Heart right ventricle (tissue), 16 donors: ENCODE measurements at regions of chr17 and their contacts with region 1.

Region 1: DNA sequence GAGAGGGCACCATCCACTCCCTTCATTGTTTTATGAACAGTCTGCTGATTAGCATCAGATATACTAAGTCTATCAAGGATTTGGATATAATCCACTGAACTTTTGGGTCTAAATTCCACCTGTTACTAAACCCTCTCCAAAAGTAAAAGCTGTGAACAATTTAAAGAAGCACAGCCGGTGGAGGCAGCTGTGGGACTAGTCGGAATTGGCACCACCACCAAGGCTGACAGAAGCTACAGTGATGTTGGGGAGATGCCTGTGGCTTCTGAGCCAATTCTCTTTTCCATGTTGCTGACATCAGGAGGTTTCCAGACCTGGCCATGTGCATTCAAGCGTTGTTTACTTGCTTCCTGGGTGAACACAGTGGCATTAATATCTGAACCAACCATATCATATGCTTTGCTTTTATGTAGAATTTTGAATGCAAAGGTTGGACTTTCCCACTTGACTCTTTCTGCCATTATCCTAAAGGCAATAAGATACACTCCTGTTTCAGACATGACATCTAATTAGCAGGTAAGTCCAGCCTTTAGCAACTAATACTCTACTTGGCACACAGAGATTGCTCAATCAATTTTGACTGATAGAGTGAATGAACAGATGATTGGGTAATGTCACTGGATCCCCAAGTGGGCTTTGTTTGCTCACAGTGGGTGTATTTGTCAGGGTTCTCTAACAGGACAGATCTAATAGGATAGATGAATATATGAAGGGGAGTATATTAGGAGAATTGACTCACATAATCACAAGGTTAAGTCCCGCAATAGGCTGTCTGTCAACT is 679.2 kb upstream of the CA10 start:
- DNase-seq: no peak
- ATAC-seq: no peak
- H3K4me3 ChIP-seq: no peak overlapping the region
- H3K27ac ChIP-seq: no peak overlapping the region
- H3K4me1 ChIP-seq: no peaks in the 10 kb centered on the region
- H3K27me3 ChIP-seq: no peaks in the 10 kb centered on the region
- CTCF ChIP-seq: no peak

Region 2: DNA sequence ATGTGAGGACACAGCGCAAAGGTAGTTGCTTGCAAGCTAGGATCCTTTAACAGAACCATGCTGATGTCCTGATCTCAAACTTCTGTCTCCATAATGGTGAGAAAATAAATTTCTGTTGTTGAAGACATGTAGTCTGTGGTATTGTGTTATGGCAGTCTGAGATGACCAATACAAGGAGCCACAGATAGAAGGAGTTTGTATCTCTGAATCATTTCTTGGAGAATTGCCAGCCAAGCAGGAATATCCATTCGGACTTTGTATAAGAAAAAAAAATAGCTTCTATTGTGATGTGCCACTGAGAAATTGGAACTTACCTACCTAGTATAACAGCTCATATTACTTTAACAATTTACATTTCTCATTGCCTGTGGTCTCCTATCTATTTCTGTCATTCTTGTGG is 231.6 kb before region 1 on chr17:
- intact Hi-C with region 1: loop called in 1 of 10 experiments (anchors 10 kb)
- DNase-seq: no peak
- ATAC-seq: peak in 2 of 8 donors; percentile 31 to 37
- H3K4me3 ChIP-seq: no peak overlapping the region
- H3K27ac ChIP-seq: no peak overlapping the region
- H3K4me1 ChIP-seq: no peaks in the 10 kb centered on the region
- H3K27me3 ChIP-seq: no peaks in the 10 kb centered on the region
- CTCF ChIP-seq: no peak

Region 3: DNA sequence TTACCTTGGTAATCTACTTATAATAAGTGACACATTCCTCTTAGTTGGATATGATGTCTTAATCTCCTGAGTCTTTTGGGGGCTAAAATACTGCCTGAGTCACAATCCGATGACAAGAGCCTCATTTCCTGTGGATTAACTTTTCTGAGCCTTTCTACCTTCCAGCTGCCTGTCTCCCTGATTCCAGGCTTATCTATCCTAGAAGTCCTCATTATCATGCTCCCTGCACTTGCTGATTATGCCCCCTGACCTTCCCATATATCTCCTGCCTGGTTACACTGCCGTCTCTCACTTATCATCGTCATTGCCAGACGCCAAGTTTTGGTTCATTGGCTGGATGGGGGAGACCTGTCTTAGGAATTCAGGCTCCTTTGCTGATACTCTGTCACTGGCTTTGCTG is 48.2 kb after region 1 on chr17:
- intact Hi-C with region 1: loop called in 1 of 10 experiments (anchors 10 kb)
- DNase-seq: no peak
- ATAC-seq: no peak
- H3K4me3 ChIP-seq: no peak overlapping the region
- H3K27ac ChIP-seq: no peak overlapping the region
- H3K4me1 ChIP-seq: no peaks in the 10 kb centered on the region
- H3K27me3 ChIP-seq: peaks cover 0 to 28% (median 8%) of the 10 kb centered on the region in 7 donors
- CTCF ChIP-seq: no peak